ENCODE measurements at regions of chr3 and their contacts with region 1.

Region 1: GRCh38 chr3:42988566-42988965 is 9.5 kb downstream of the GASK1A start:
- DNase-seq: no peak
- H3K4me3 ChIP-seq: no peak overlapping the region
- H3K4me3 Mint-ChIP-seq: no peak overlapping the region
- H3K27ac ChIP-seq: no peak overlapping the region
- H3K27ac Mint-ChIP-seq: no peak overlapping the region
- H3K4me1 ChIP-seq: no peaks in the 10 kb centered on the region
- H3K4me1 Mint-ChIP-seq: no peaks in the 10 kb centered on the region
- H3K27me3 ChIP-seq: no peaks in the 10 kb centered on the region
- H3K27me3 Mint-ChIP-seq: peaks cover 1 to 2% (median 2%) of the 10 kb centered on the region in 3 donors
- CTCF ChIP-seq: no peak

Region 2: DNA sequence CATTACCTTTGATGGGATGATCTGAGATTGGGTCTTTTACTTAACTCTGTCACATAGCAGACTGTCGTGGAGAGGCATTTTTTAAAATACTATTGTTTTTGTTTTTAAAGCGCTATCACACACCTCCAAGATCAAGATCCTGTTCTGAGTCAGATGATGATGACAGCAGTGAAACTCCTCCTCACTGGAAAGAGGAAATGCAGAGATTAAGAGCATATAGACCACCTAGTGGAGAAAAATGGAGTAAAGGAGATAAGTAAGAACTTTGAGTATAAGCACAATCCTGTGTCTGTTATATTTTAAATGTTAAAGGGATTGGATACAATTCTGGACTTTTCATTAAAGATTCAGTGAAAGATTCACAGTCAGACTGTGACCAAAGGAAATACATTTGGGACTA is 353.5 kb before region 1 on chr3:
- intact Hi-C with region 1: no loop called
- DNase-seq: peak; percentile 45 to 67 (median 64)
- H3K4me3 ChIP-seq: no peak overlapping the region
- H3K4me3 Mint-ChIP-seq: no peak overlapping the region
- H3K27ac ChIP-seq: peak overlapping the region in 1 of 2 donors; percentile 21
- H3K27ac Mint-ChIP-seq: peak overlapping the region in 5 of 7 donors; percentile 12 to 61 (median 23)
- H3K4me1 ChIP-seq: no peaks in the 10 kb centered on the region
- H3K4me1 Mint-ChIP-seq: peaks cover 2% of the 10 kb centered on the region
- H3K27me3 ChIP-seq: no peaks in the 10 kb centered on the region
- H3K27me3 Mint-ChIP-seq: no peaks in the 10 kb centered on the region
- CTCF ChIP-seq: peak; percentile 50

Region 3: GRCh38 chr3:43019826-43020225 is 31.3 kb after region 1 on chr3:
- intact Hi-C with region 1: loop called in 1 of 2 experiments (anchors 1 kb)
- DNase-seq: no peak
- H3K4me3 ChIP-seq: no peak overlapping the region
- H3K4me3 Mint-ChIP-seq: no peak overlapping the region
- H3K27ac ChIP-seq: no peak overlapping the region
- H3K27ac Mint-ChIP-seq: peak overlapping the region in 1 of 7 donors; percentile 75
- H3K4me1 ChIP-seq: peaks cover 0 to 12% of the 10 kb centered on the region in 2 donors
- H3K4me1 Mint-ChIP-seq: peaks cover 19% of the 10 kb centered on the region
- H3K27me3 ChIP-seq: no peaks in the 10 kb centered on the region
- H3K27me3 Mint-ChIP-seq: peaks cover 0 to 2% (median 0%) of the 10 kb centered on the region in 3 donors
- CTCF ChIP-seq: no peak

Region 4: DNA sequence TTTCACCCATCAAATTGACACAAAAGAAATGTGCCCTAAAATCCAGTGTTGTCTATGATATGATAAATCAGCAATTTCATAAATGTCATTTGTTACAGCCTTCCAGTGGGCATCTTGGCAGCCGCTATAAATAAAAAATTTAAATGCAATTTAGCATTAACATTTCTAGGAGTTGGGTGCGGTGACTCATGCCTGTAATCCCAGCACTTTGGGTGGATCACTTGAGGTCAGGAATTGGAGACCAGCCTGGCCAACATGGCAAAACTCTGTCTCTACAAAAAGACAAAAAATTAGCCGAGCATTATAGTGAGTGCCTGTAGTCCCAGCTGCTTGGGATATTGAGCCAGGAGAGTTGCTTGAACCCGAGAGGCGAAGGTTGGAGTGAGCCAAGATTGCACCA is 183.2 kb after region 1 on chr3:
- intact Hi-C with region 1: no loop called
- DNase-seq: no peak
- H3K4me3 ChIP-seq: no peak overlapping the region
- H3K4me3 Mint-ChIP-seq: no peak overlapping the region
- H3K27ac ChIP-seq: no peak overlapping the region
- H3K27ac Mint-ChIP-seq: no peak overlapping the region
- H3K4me1 ChIP-seq: peaks cover 0 to 11% of the 10 kb centered on the region in 2 donors
- H3K4me1 Mint-ChIP-seq: peaks cover 16% of the 10 kb centered on the region
- H3K27me3 ChIP-seq: no peaks in the 10 kb centered on the region
- H3K27me3 Mint-ChIP-seq: peaks cover 0 to 2% (median 2%) of the 10 kb centered on the region in 3 donors
- CTCF ChIP-seq: no peak

Measured in CD14-positive monocyte (primary cell).